ENCODE measurements at regions of chr16 and their contacts with region 1.

Region 1: GRCh38 chr16:19375561-19376158 is 42.0 kb upstream of the TMC5 start:
- DNase-seq: peak in 1 of 3 donors; percentile 22
- ATAC-seq: peak; percentile 50 to 71
- H3K4me3 ChIP-seq: no peak overlapping the region
- H3K27ac ChIP-seq: no peak overlapping the region
- H3K4me1 ChIP-seq: no peaks in the 10 kb centered on the region
- H3K27me3 ChIP-seq: no peaks in the 10 kb centered on the region

Region 2: GRCh38 chr16:19179546-19180490 is 195.8 kb before region 1 on chr16:
- intact Hi-C with region 1: loop called in 1 of 4 experiments (anchors 10 kb)
- DNase-seq: peak; percentile 70 to 88 (median 85)
- ATAC-seq: peak; percentile 73 to 80
- H3K4me3 ChIP-seq: no peak overlapping the region
- H3K27ac ChIP-seq: no peak overlapping the region
- H3K4me1 ChIP-seq: no peaks in the 10 kb centered on the region
- H3K27me3 ChIP-seq: no peaks in the 10 kb centered on the region

Region 3: GRCh38 chr16:19481296-19481695 is 105.6 kb after region 1 on chr16:
- intact Hi-C with region 1: no loop called
- DNase-seq: no peak
- ATAC-seq: no peak
- H3K4me3 ChIP-seq: no peak overlapping the region
- H3K27ac ChIP-seq: no peak overlapping the region
- H3K4me1 ChIP-seq: no peaks in the 10 kb centered on the region
- H3K27me3 ChIP-seq: no peaks in the 10 kb centered on the region

Measured in right cardiac atrium (tissue), 5 donors.